ENCODE measurements at regions of chr2 and their contacts with region 1.

Region 1: GRCh38 chr2:136423516-136423996 is 305.6 kb upstream of the CXCR4 start:
- DNase-seq: peak; percentile 55
- ATAC-seq: peak; percentile 99
- H3K4me3 ChIP-seq: peak overlapping the region; percentile 38 to 48
- H3K27ac ChIP-seq: no peak overlapping the region
- H3K4me1 ChIP-seq: peaks cover 0 to 9% of the 10 kb centered on the region in 2 experiments; a peak in 1 of 4 replicates
- H3K27me3 ChIP-seq: peaks cover 33% of the 10 kb centered on the region; the same call in 1 of the 2 replicates
- CTCF ChIP-seq: peak; percentile 77 to 84 (median 82)
- POLR2A ChIP-seq: no peak
- RAD21 ChIP-seq: peak; percentile 89

Region 2: DNA sequence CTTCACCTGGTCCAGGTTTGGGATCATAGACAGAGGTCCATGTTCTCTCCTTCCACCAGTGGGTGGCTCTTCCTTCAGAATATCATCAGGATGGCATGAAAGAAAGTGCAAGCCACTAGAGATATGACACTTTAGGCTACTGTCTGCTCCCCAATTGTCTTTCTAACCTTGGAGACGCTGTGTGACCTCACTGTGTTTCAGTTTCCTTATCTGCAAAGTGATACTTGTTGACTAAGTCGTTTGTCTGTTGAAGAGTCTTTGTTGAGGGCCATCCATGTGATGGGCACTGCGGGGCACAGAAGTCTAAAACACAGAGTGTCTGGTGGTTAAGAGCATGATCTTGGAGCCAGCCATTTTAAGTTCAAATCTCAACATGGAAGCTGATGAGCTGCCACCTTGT is 81.9 kb after region 1 on chr2:
- CTCF ChIA-PET with region 1: no interaction called
- POLR2A ChIA-PET with region 1: no interaction called
- RAD21 ChIA-PET with region 1: no interaction called
- intact Hi-C with region 1: no loop called
- DNase-seq: no peak
- ATAC-seq: no peak
- H3K4me3 ChIP-seq: no peak overlapping the region
- H3K27ac ChIP-seq: no peak overlapping the region
- H3K4me1 ChIP-seq: no peaks in the 10 kb centered on the region
- H3K27me3 ChIP-seq: peaks cover 14% of the 10 kb centered on the region; the same call in 1 of the 2 replicates
- CTCF ChIP-seq: no peak
- POLR2A ChIP-seq: no peak
- RAD21 ChIP-seq: no peak

Region 3: GRCh38 chr2:136738044-136738443 is 314.5 kb after region 1 on chr2:
- CTCF ChIA-PET with region 1: interaction called, 6 read pairs
- POLR2A ChIA-PET with region 1: no interaction called
- RAD21 ChIA-PET with region 1: no interaction called
- intact Hi-C with region 1: loop called (anchors 5 kb)
- DNase-seq: no peak
- ATAC-seq: no peak
- H3K4me3 ChIP-seq: no peak overlapping the region
- H3K27ac ChIP-seq: no peak overlapping the region
- H3K4me1 ChIP-seq: no peaks in the 10 kb centered on the region
- H3K27me3 ChIP-seq: no peaks in the 10 kb centered on the region
- CTCF ChIP-seq: no peak
- POLR2A ChIP-seq: no peak
- RAD21 ChIP-seq: no peak

Region 4: GRCh38 chr2:137677463-137677862 is 1253.9 kb after region 1 on chr2:
- CTCF ChIA-PET with region 1: no interaction called
- POLR2A ChIA-PET with region 1: no interaction called
- RAD21 ChIA-PET with region 1: no interaction called
- intact Hi-C with region 1: loop called (anchors 10 kb)
- DNase-seq: no peak
- ATAC-seq: no peak
- H3K4me3 ChIP-seq: no peak overlapping the region
- H3K27ac ChIP-seq: no peak overlapping the region
- H3K4me1 ChIP-seq: no peaks in the 10 kb centered on the region
- H3K27me3 ChIP-seq: no peaks in the 10 kb centered on the region
- CTCF ChIP-seq: peak in 1 of 3 experiments; percentile 17; a peak in 2 of 6 replicates
- POLR2A ChIP-seq: no peak
- RAD21 ChIP-seq: peak; percentile 14; the same call in 1 of the 2 replicates

Region 5: DNA sequence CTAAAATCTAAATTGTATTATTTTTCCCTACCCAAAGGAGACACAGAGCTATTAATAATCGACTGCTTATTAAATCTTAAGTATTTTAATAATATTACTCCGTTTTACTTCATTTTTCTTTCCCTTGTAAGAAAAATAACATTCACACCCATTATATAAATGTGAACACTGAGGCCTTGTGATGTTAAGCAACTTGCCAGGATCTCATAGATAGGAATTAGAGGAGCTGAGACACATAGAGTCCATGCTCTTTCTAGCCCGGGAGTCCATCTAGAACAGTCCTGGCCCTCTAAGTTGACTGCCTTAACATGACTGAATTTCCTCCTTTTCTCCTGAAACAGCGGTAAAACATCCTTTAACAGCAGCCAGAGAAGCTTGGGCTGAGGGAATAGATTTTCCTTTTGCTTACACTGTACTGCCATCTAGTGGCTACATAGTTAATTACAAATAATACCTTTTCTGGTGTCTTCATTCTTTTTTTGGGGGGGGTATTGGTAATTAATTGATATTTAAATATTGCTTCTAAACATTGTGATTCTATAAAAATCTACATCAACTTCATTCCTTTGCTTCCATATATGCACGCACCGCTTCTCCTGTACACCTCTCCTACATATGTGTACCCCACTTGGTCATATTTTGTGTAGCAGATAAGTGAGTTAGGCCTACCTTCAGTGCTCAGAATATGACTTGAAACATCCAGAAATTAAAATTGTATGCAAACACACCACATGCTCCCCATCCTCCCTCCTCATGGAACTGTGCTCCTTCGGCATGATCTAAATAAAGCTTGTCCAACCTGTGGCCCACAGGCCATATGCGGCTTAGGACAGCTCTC is 1414.9 kb after region 1 on chr2:
- CTCF ChIA-PET with region 1: no interaction called
- POLR2A ChIA-PET with region 1: no interaction called
- RAD21 ChIA-PET with region 1: no interaction called
- intact Hi-C with region 1: loop called (anchors 1 kb)
- DNase-seq: peak; percentile 29
- ATAC-seq: peak; percentile 70
- H3K4me3 ChIP-seq: no peak overlapping the region
- H3K27ac ChIP-seq: no peak overlapping the region
- H3K4me1 ChIP-seq: no peaks in the 10 kb centered on the region
- H3K27me3 ChIP-seq: peaks cover 3% of the 10 kb centered on the region; the same call in 1 of the 2 replicates
- CTCF ChIP-seq: peak; percentile 28 to 74 (median 51); a peak in 4 of 6 replicates
- POLR2A ChIP-seq: no peak
- RAD21 ChIP-seq: peak; percentile 80

Measured in HCT116 (cell line).